Heart right ventricle (tissue), 16 donors: ENCODE measurements at regions of chr19 and their contacts with region 1.

Region 1: GRCh38 chr19:50777754-50778303 is 7.6 kb downstream of the GPR32 start:
- DNase-seq: no peak
- ATAC-seq: no peak
- H3K4me3 ChIP-seq: no peak overlapping the region
- H3K27ac ChIP-seq: no peak overlapping the region
- H3K4me1 ChIP-seq: no peaks in the 10 kb centered on the region
- H3K27me3 ChIP-seq: peaks cover 11 to 99% (median 89%) of the 10 kb centered on the region in 7 donors
- CTCF ChIP-seq: no peak

Region 2: GRCh38 chr19:50252111-50252886 is 525.5 kb before region 1 on chr19:
- intact Hi-C with region 1: loop called in 1 of 10 experiments (anchors 10 kb)
- DNase-seq: no peak
- ATAC-seq: no peak
- H3K4me3 ChIP-seq: no peak overlapping the region
- H3K27ac ChIP-seq: no peak overlapping the region
- H3K4me1 ChIP-seq: no peaks in the 10 kb centered on the region
- H3K27me3 ChIP-seq: no peaks in the 10 kb centered on the region
- CTCF ChIP-seq: peak in 8 of 9 donors; percentile 35 to 65 (median 56)

Region 3: GRCh38 chr19:50368649-50369570 is 408.9 kb before region 1 on chr19:
- intact Hi-C with region 1: loop called in 6 of 10 experiments (anchors 2 to 10 kb)
- DNase-seq: peak; percentile 80 to 87
- ATAC-seq: peak; percentile 87 to 97 (median 95)
- H3K4me3 ChIP-seq: peak overlapping the region; percentile 38 to 80 (median 72)
- H3K27ac ChIP-seq: peak overlapping the region in 9 of 10 donors; percentile 59 to 91 (median 80)
- H3K4me1 ChIP-seq: peaks cover 0 to 16% (median 5%) of the 10 kb centered on the region in 9 donors
- H3K27me3 ChIP-seq: no peaks in the 10 kb centered on the region
- CTCF ChIP-seq: peak; percentile 78 to 93 (median 90)

Region 4: DNA sequence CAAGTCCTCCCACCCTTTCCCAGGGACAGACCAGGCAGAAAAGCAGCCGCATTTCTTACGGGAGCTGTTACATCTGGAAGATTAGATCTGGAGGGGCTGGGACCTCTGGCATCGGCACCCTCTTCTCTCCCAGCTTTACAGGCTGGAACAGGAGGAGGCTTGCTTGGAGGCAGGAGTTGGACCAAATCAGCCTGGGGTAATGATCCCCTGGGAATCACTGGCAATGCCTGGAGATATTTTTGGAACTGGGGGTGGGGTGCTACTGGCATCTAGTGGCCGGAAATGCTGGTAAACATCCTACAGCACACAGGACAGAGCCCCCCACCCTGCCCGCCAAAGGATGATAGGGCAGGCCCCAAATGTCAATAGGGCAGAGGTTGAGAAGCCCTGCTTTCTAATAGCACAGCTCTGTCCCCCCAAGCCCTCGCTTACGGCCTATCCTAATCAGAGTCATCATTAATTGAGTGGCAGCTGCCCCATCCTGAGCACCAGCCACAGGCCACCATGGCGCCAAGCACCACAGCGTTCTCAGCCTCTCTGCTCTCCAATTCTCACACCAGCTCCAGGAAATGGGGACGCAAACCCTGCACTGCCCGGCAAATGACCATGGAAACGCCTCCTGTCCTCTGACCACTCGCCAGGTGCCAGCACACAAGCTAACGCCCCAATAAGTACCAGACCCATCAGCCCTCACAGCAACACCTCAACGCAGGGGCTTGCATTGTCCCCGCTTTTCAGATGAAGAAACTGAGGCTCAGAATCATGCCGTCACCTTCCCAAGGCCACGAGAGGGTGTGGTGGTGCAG is 230.2 kb before region 1 on chr19:
- intact Hi-C with region 1: loop called in 1 of 10 experiments (anchors 10 kb)
- DNase-seq: no peak
- ATAC-seq: peak in 3 of 8 donors; percentile 20 to 30 (median 25)
- H3K4me3 ChIP-seq: no peak overlapping the region
- H3K27ac ChIP-seq: no peak overlapping the region
- H3K4me1 ChIP-seq: no peaks in the 10 kb centered on the region
- H3K27me3 ChIP-seq: peaks cover 0 to 56% (median 30%) of the 10 kb centered on the region in 7 donors
- CTCF ChIP-seq: peak in 3 of 9 donors; percentile 8 to 31 (median 10)

Region 5: DNA sequence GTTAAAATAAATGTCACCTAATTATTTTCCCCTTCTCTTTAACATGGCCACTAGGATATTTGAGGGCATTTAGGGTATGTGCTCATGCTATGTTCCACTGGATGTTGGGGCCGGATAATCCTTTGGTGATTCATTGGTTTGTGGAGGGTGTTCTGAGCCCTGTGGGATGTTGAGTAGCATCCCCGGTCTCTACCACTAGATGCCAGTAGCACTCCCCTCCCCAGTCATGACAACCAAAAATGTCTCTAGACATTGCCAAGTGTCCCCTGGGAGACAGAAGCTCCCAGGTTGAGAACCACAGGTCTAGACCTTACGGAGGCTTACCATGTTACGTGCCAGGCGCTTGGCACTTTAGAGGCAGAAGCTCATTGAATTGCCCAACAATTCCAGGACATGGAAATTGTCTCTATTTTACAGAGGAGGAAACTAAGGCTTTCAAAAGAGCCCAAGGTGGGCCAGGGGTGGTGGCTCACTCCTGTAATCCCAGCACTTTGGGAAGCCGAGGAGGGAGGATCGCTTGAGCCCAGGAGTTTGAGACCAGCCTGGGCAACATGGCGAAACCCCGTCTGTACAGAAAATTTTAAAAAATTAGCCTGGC is 72.3 kb before region 1 on chr19:
- intact Hi-C with region 1: loop called in 4 of 10 experiments (anchors 2 to 10 kb)
- DNase-seq: no peak
- ATAC-seq: peak in 3 of 8 donors; percentile 42 to 58 (median 44)
- H3K4me3 ChIP-seq: no peak overlapping the region
- H3K27ac ChIP-seq: no peak overlapping the region
- H3K4me1 ChIP-seq: no peaks in the 10 kb centered on the region
- H3K27me3 ChIP-seq: peaks cover 5 to 72% (median 46%) of the 10 kb centered on the region in 7 donors
- CTCF ChIP-seq: peak; percentile 13 to 70 (median 51)

Region 6: DNA sequence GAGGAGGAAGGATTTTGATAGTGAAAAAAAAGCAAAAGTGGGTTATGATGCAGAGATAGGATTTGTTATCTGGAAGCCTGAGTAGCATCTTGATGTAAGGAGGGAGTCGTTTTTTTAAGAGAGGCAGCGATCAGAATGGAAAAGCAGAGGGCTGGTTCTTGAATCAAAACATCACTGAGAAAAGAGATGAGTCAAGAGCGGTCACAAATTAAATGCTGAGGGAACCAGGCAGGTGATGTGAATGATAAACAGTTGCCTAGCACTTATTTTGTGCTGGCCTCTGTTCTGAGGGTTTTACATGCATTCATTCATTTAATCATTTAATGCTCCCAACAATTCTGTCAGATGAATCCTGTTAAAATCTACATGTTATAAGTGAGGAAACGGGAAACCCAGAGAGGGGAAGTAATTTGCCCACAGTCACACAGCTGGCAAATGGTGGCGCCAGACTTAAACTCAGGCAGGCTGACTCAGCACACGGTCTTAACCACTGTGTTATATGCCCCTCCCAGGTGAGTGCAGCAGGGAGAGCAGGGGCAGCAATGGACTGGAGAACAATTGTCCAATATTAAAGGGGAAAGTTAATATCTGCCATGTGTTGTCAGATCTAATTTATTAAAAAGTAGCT is 494.5 kb after region 1 on chr19:
- intact Hi-C with region 1: no loop called
- DNase-seq: no peak
- ATAC-seq: no peak
- H3K4me3 ChIP-seq: no peak overlapping the region
- H3K27ac ChIP-seq: peak overlapping the region in 1 of 10 donors; percentile 31
- H3K4me1 ChIP-seq: peaks cover 0 to 14% (median 0%) of the 10 kb centered on the region in 9 donors
- H3K27me3 ChIP-seq: peaks cover 0 to 58% (median 12%) of the 10 kb centered on the region in 7 donors
- CTCF ChIP-seq: no peak